ENCODE measurements at regions of chr13 and their contacts with region 1.

Region 1: GRCh38 chr13:88802886-88803285 is 1131.7 kb downstream of the SLITRK5 start:
- DNase-seq: no peak

Region 2: DNA sequence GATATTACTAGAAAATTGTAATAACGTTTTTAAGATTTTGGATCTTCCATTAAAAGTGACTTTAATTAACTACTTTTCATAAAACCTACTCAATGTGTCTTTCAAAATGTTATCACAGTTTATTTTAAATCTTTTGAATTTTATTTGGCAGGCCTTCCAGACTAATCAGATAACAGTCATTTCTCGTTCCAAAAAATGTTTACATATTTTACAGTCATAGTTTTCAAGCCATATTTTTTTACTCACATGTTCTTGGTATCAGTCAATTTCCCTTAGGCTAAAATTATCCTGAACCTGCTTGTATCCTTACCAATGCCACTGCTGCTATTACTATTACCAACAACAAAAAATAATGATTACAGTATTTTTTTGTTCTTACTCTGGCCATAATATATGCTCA is 651.8 kb after region 1 on chr13:
- intact Hi-C with region 1: loop called in 1 of 2 experiments (anchors 5 kb)
- DNase-seq: no peak